Activated B cell treated with CpG ODN at 0.5 μM for 24 hours (primary cell): ENCODE measurements at regions of chr14 and their contacts with region 1.

Region 1: DNA sequence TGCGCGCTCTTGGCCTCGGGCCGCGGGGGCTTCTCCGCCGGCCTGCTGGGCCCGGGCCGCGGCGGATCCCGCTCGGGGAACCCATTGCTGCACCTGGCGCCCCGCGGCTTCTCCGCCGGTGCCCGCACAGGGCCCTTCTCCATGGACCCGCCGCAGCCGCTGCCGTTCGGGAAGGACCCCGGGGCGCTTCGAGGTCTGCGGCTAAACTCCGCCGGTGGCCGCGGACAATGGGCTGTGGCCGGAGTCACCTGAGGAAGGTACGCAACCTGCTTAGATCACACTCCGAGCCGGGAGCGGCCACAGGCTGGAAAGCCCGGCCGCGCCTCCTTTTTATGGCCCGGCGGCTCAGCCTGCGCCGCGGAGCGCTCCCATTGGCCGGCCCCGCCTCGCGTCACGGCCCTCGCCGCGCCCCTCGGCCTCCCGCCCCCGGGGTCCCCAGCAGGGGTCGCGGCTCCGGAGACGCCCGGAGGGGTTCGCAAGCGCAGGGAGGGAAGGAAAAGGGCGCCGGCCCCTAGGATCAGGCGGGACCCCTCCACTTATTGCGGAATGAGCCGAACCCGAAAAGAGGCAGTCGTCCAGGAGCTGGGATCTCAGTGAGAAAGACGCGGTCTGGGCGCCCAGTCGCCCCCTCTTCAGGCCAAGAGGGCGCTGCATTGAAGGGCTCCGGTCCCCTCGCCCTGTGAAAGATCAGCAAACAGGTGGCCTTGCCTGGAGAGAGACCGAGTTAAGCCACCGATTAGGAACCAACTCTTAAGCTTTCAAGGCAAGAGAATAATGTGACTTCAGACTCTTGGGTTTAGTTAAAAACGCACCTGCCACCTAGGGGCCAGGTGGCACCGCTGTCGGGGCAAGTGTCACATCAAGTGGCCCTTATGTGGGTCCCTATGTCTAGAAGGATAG is at the start of gene GCH1:
- DNase-seq: peak; percentile 85
- ATAC-seq: peak; percentile 87
- H3K4me3 Mint-ChIP-seq: peak within 1 kb of the TSS; percentile 89
- H3K27ac Mint-ChIP-seq: peak within 1 kb of the TSS; percentile 90
- H3K4me1 Mint-ChIP-seq: peaks cover 14% of the 10 kb centered on the region
- H3K27me3 Mint-ChIP-seq: no peaks in the 10 kb centered on the region
- CTCF ChIP-seq: no peak
- total RNA-seq, gene GCH1: 15.5 and 17.2 TPM in 2 replicates

Region 2: DNA sequence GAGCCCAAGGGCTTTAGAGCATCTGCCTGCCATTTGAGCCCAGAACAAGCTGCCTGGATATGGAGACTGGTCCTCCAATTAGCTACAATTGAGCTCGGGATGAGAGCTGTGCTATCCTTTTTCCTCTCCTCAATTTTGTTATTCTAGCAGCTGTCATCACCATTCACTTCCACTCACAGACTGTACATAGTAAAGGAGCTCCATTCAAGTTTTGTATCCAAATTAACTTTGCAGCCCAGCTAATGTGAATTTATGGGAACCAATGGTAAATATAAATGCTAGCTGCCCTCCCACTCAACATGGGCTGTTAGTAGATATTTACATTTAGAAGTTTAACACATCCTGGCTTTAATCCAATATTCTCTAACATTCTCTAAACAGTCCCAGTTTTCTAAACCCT is 990.8 kb before region 1 on chr14:
- CTCF ChIA-PET with region 1: no interaction called
- POLR2A ChIA-PET with region 1: no interaction called
- intact Hi-C with region 1: no loop called
- DNase-seq: no peak
- ATAC-seq: no peak
- H3K4me3 Mint-ChIP-seq: no peak overlapping the region
- H3K27ac Mint-ChIP-seq: no peak overlapping the region
- H3K4me1 Mint-ChIP-seq: no peaks in the 10 kb centered on the region
- H3K27me3 Mint-ChIP-seq: no peaks in the 10 kb centered on the region
- CTCF ChIP-seq: no peak

Region 3: GRCh38 chr14:54509546-54510501 is 392.9 kb before region 1 on chr14 and contains the start of gene CGRRF1:
- CTCF ChIA-PET with region 1: no interaction called
- POLR2A ChIA-PET with region 1: no interaction called
- intact Hi-C with region 1: loop called (anchors 1 kb)
- DNase-seq: peak; percentile 98
- ATAC-seq: peak; percentile 98
- H3K4me3 Mint-ChIP-seq: peak within 1 kb of the TSS; percentile 95
- H3K27ac Mint-ChIP-seq: peak within 1 kb of the TSS; percentile 89
- H3K4me1 Mint-ChIP-seq: peaks cover 41% of the 10 kb centered on the region
- H3K27me3 Mint-ChIP-seq: no peaks in the 10 kb centered on the region
- CTCF ChIP-seq: no peak
- total RNA-seq, gene CGRRF1: 11.9 and 14.1 TPM in 2 replicates

Region 4: GRCh38 chr14:54773171-54773975 is 129.4 kb before region 1 on chr14:
- CTCF ChIA-PET with region 1: interaction called, 5 read pairs
- POLR2A ChIA-PET with region 1: no interaction called
- intact Hi-C with region 1: loop called (anchors 2 kb)
- DNase-seq: no peak
- ATAC-seq: peak; percentile 32
- H3K4me3 Mint-ChIP-seq: peak overlapping the region; percentile 32
- H3K27ac Mint-ChIP-seq: peak overlapping the region; percentile 62
- H3K4me1 Mint-ChIP-seq: peaks cover 50% of the 10 kb centered on the region
- H3K27me3 Mint-ChIP-seq: no peaks in the 10 kb centered on the region
- CTCF ChIP-seq: no peak

Region 5: GRCh38 chr14:54881235-54881760 is 21.5 kb before region 1 on chr14:
- CTCF ChIA-PET with region 1: interaction called, 12 read pairs
- POLR2A ChIA-PET with region 1: interaction called, 18 read pairs
- intact Hi-C with region 1: loop called (anchors 1 kb)
- DNase-seq: no peak
- ATAC-seq: peak; percentile 65
- H3K4me3 Mint-ChIP-seq: peak overlapping the region; percentile 88
- H3K27ac Mint-ChIP-seq: peak overlapping the region; percentile 97
- H3K4me1 Mint-ChIP-seq: peaks cover 24% of the 10 kb centered on the region
- H3K27me3 Mint-ChIP-seq: no peaks in the 10 kb centered on the region
- CTCF ChIP-seq: no peak

Region 6: GRCh38 chr14:54922598-54922997 is 19.8 kb after region 1 on chr14:
- CTCF ChIA-PET with region 1: no interaction called
- POLR2A ChIA-PET with region 1: no interaction called
- intact Hi-C with region 1: no loop called
- DNase-seq: no peak
- ATAC-seq: no peak
- H3K4me3 Mint-ChIP-seq: no peak overlapping the region
- H3K27ac Mint-ChIP-seq: no peak overlapping the region
- H3K4me1 Mint-ChIP-seq: no peaks in the 10 kb centered on the region
- H3K27me3 Mint-ChIP-seq: no peaks in the 10 kb centered on the region
- CTCF ChIP-seq: no peak

Region 7: DNA sequence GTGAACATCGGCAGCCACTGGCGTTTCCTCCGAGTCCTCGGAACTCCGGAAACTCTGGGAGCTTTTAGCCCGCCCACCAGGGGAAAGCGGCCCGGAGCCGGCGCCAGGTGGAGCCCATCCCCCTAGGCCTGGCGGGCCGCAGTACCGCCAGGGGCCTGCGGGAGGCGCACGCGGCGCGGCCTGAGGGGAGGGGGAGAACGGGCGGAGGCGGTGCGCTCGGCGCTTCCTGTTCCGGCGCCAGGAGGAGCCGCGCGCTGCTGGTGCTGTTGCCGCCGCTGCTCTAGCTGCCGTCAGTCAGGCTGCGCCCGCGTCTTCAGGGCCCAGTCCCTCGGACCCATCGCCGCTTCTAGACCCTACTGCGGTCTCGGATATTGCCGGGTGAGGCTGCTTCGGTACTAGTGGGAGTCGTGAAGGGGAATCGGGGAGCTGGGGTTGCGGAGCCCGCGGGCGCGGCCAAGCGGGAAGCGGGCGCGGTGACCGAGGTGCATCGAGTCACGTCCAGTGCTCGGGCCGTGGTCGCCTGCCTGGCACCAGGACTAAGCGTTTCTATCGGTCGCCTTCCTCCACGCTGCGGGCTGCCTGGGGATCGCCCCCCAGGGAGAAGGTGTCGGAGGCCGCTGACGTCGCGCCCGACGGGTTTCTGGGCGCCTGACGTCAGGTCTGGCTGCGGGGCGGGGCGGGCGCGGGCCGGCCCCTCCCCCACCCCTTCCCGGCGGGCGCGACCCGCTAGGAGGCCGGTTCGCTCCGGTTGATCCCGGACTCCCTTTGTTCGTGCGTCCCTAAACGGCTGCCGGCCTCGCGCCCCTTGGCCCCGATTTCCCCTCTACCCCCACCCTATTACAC is 148.9 kb after region 1 on chr14 and contains the start of gene MAPK1IP1L:
- CTCF ChIA-PET with region 1: no interaction called
- POLR2A ChIA-PET with region 1: interaction called, 11 read pairs
- intact Hi-C with region 1: loop called (anchors 1 kb)
- DNase-seq: peak; percentile 97
- ATAC-seq: peak; percentile 94
- H3K4me3 Mint-ChIP-seq: peak within 1 kb of the TSS; percentile 94
- H3K27ac Mint-ChIP-seq: peak within 1 kb of the TSS; percentile 95
- H3K4me1 Mint-ChIP-seq: peaks cover 39% of the 10 kb centered on the region
- H3K27me3 Mint-ChIP-seq: no peaks in the 10 kb centered on the region
- CTCF ChIP-seq: peak; percentile 75
- total RNA-seq, gene MAPK1IP1L: 119 and 130 TPM in 2 replicates

Region 8: DNA sequence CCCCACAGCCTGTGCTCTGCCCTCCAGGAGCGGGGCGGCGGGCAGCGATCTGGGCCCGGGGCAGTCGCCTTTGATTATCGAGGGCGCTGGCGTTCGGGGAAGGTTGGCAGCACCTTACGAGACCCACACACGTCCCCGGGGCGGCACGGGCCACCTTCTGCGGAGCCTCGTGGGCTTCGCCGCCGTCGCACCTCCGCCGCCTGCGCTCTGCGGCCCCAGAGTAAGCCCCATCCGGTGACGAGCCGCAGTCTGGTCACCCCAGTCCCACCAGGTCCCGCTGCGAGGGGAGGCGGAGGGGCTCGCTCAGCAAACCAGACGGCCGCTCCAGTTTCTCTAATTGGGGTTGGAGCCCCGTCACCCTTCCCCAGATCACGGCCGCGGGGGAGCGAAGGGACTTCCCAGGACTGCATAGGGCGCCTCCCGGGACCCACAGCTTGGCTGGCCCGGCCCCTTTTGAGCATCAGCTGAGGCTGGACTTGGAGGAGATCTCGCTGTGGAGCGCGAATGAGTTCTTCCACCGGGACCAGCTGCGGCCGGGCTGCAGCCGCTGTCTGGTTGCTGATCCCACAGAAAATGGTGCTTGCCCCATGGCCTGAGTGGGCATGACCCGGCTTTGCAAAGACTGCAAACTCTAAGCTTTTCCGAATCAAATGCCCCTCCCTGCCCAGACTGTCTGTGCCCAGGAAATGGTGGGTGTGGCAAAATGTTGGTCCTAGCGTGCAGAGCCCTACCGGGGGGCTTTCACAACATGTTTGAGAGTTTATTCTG is 226.8 kb after region 1 on chr14:
- CTCF ChIA-PET with region 1: no interaction called
- POLR2A ChIA-PET with region 1: interaction called, 4 read pairs
- intact Hi-C with region 1: loop called (anchors 1 kb)
- DNase-seq: peak; percentile 83
- ATAC-seq: peak; percentile 83
- H3K4me3 Mint-ChIP-seq: peak overlapping the region; percentile 90
- H3K27ac Mint-ChIP-seq: peak overlapping the region; percentile 88
- H3K4me1 Mint-ChIP-seq: peaks cover 46% of the 10 kb centered on the region
- H3K27me3 Mint-ChIP-seq: peaks cover 2% of the 10 kb centered on the region
- CTCF ChIP-seq: no peak

Region 9: DNA sequence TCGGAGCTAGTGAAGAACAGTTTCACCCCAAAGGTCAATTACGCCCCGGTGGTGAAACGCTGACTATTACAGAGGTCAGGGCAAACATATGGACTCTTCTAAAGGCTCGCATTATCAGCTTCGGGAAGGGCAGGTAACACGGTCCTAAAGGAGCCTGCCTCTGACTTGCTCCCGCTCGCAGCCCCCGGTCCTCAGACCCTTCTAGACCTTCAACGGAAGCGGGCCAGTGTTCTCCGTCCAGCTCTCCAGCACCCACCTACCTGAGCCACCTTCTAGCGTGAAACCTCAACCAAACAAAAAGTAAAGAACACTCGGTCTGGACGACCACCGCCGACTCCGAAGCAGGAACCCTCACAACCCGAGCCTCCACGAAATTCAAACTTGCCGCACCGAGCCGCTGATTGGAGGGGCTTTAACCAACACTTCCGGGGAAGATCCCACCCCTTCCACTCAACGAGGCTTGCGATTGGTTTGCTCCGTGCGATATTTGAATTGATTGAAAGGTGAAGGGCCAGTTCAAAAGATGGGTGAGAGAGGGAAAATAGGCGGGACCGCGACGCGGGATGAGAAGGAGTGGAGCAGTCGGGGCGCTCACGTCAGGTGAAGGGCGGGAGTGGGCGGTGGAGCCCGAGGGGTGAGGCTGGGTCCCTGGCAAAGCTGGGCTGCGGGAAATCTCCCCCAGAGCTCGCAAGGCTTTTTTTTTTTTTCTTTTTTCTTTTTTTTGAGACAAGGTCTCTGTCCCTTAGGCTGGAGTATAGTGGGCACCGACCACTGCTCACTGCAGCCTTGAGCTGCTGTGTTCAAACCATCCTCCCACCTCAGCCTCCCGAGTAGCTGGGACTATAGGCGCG is 288.7 kb after region 1 on chr14 and contains the start of gene DLGAP5:
- CTCF ChIA-PET with region 1: no interaction called
- POLR2A ChIA-PET with region 1: no interaction called
- intact Hi-C with region 1: loop called (anchors 1 kb)
- DNase-seq: peak; percentile 68
- ATAC-seq: peak; percentile 99
- H3K4me3 Mint-ChIP-seq: peak within 1 kb of the TSS; percentile 84
- H3K27ac Mint-ChIP-seq: peak within 1 kb of the TSS; percentile 46
- H3K4me1 Mint-ChIP-seq: peaks cover 13% of the 10 kb centered on the region
- H3K27me3 Mint-ChIP-seq: no peaks in the 10 kb centered on the region
- CTCF ChIP-seq: no peak
- total RNA-seq, gene DLGAP5: 0.66 and 0.73 TPM in 2 replicates